ENCODE measurements at regions of chr2 and their contacts with region 1.

Region 1: GRCh38 chr2:134446383-134447017 is 192.6 kb downstream of the MGAT5 start:
- DNase-seq: no peak
- H3K4me3 ChIP-seq: no peak overlapping the region
- H3K27ac ChIP-seq: no peak overlapping the region; a peak in 1 of 4 replicates
- H3K4me1 ChIP-seq: peaks cover 5 to 19% of the 10 kb centered on the region in 2 experiments; a peak in 1 of 4 replicates
- H3K27me3 ChIP-seq: no peaks in the 10 kb centered on the region
- CTCF ChIP-seq: no peak
- EP300 ChIP-seq: peak in 1 of 2 experiments; percentile 48; a peak in 1 of 4 replicates
- RAD21 ChIP-seq: no peak

Region 2: GRCh38 chr2:133886735-133887660 is 559.5 kb before region 1 on chr2:
- CTCF ChIA-PET with region 1: interaction called, 105 read pairs
- POLR2A ChIA-PET with region 1: no interaction called
- DNase-seq: peak; percentile 65
- H3K4me3 ChIP-seq: no peak overlapping the region; a peak in 1 of 4 replicates
- H3K27ac ChIP-seq: no peak overlapping the region
- H3K4me1 ChIP-seq: peaks cover 0 to 9% of the 10 kb centered on the region in 2 experiments; a peak in 1 of 4 replicates
- H3K27me3 ChIP-seq: no peaks in the 10 kb centered on the region; the same call in 1 of the 2 replicates
- CTCF ChIP-seq: peak; percentile 69
- EP300 ChIP-seq: no peak
- RAD21 ChIP-seq: peak; percentile 86

Region 3: GRCh38 chr2:134518135-134518534 is 71.6 kb after region 1 on chr2:
- CTCF ChIA-PET with region 1: no interaction called
- POLR2A ChIA-PET with region 1: no interaction called
- DNase-seq: no peak
- H3K4me3 ChIP-seq: no peak overlapping the region
- H3K27ac ChIP-seq: no peak overlapping the region
- H3K4me1 ChIP-seq: peaks cover 0 to 23% of the 10 kb centered on the region in 2 experiments; a peak in 2 of 4 replicates
- H3K27me3 ChIP-seq: no peaks in the 10 kb centered on the region
- CTCF ChIP-seq: no peak
- EP300 ChIP-seq: no peak
- RAD21 ChIP-seq: no peak

Measured in SK-N-SH (cell line).